B cell (primary cell): ENCODE measurements at regions of chr11 and their contacts with region 1.

Region 1: GRCh38 chr11:35822815-35823495 is 120.9 kb upstream of the LDLRAD3 start:
- DNase-seq: no peak
- ATAC-seq: no peak
- H3K4me3 ChIP-seq: no peak overlapping the region
- H3K4me3 Mint-ChIP-seq: no peak overlapping the region
- H3K27ac ChIP-seq: no peak overlapping the region
- H3K27ac Mint-ChIP-seq: no peak overlapping the region
- H3K4me1 ChIP-seq: peaks cover 3 to 9% of the 10 kb centered on the region in 2 donors
- H3K4me1 Mint-ChIP-seq: peaks cover 12% of the 10 kb centered on the region
- H3K27me3 ChIP-seq: no peaks in the 10 kb centered on the region
- H3K27me3 Mint-ChIP-seq: peaks cover 4% of the 10 kb centered on the region
- CTCF ChIP-seq: no peak

Region 2: DNA sequence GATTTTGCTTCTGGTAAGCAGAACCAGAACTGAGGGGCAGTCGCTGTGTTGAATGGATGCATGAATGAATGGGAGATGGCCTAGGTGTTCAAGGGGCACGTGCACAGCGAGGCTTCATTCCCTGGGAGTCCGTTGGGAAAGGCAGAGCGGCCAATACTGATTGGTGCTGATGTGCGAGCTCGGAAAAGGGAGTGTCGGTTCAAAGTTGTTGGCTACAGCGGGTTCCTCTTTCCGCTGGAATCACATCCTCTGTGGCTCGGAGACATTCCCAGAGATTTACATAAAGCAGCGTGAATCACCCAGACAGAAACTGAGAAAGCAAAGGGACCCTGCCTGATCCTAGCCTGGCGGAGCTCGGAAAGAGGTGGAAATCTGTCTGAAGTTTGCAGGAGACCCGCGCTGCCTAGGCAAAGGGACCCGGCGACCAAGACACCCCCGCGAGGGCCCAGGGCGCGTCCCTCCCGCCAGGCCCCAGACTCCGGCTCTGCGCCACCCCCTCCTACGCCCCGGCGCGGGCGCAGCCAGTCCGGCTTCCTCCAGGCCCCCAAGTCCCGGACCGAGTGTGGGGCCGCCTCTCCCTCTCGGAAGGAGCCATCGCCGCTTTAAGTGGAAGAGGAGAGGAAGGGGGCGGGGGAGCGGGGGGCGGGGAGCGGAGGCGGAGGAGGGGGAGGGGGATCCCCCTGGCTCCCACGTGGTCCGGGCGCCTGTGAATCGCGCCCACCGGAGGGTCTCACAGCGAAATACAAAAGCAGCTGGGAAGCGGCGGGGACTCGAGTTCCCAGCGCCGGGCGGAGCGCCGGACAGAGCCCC is 205.1 kb before region 1 on chr11 and contains the start of gene FJX1:
- CTCF ChIA-PET with region 1: interaction called, 8 read pairs
- POLR2A ChIA-PET with region 1: no interaction called
- intact Hi-C with region 1: loop called (anchors 1 kb)
- DNase-seq: peak; percentile 29
- ATAC-seq: peak; percentile 38
- H3K4me3 ChIP-seq: peak within 1 kb of the TSS; percentile 7 to 55 (median 42)
- H3K4me3 Mint-ChIP-seq: peak within 1 kb of the TSS; percentile 83
- H3K27ac ChIP-seq: no peak within 1 kb of the TSS
- H3K27ac Mint-ChIP-seq: no peak within 1 kb of the TSS
- H3K4me1 ChIP-seq: peaks cover 17 to 21% of the 10 kb centered on the region in 2 donors
- H3K4me1 Mint-ChIP-seq: peaks cover 16% of the 10 kb centered on the region
- H3K27me3 ChIP-seq: peaks cover 0 to 52% (median 32%) of the 10 kb centered on the region in 4 experiments
- H3K27me3 Mint-ChIP-seq: peaks cover 44% of the 10 kb centered on the region
- CTCF ChIP-seq: no peak
- total RNA-seq, gene FJX1: 0.36 TPM in 1 of 2 replicates, not detected in the other

Region 3: DNA sequence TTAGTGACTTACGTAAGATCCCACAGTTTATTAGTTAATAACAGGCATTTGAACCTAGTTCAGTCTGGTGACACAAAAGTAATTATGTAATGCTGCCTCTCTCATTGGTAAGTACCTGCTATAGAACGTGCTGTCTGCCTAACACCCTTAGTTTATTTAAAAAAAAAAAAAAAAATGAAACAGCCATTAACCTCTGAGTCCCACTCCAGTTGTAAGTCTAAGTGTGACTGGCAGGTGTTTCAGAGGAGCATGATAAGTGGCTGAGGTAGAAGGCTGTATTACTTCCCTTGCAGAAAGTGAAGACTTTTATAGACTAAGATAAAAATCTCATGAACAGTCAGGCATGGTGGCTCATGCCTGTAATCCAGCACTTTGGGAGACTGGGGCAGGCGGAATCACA is 19.8 kb before region 1 on chr11:
- CTCF ChIA-PET with region 1: interaction called, 12 read pairs
- POLR2A ChIA-PET with region 1: interaction called, 3 read pairs
- intact Hi-C with region 1: no loop called
- DNase-seq: no peak
- ATAC-seq: no peak
- H3K4me3 ChIP-seq: no peak overlapping the region
- H3K4me3 Mint-ChIP-seq: no peak overlapping the region
- H3K27ac ChIP-seq: no peak overlapping the region
- H3K27ac Mint-ChIP-seq: no peak overlapping the region
- H3K4me1 ChIP-seq: peaks cover 9 to 10% of the 10 kb centered on the region in 2 donors
- H3K4me1 Mint-ChIP-seq: peaks cover 19% of the 10 kb centered on the region
- H3K27me3 ChIP-seq: no peaks in the 10 kb centered on the region
- H3K27me3 Mint-ChIP-seq: no peaks in the 10 kb centered on the region
- CTCF ChIP-seq: no peak

Region 4: DNA sequence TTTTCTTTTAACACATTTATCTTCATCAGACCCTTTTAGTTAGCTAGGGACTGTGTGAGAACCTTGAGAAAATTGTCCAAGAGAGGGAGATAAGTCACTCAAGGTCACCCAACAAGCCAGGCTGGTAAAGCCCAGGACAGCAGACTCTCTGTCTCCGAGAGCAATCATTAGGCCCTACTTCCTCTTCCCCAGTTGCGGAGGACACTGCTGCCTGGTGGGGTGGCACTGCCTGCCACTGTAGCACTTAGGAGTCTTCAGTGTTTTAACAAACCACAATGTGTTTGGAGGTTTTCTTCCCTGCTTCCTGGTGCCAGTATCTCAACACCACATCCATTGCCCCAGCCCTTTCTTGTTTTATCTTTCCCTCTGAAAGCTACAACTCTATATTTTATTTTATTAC is 11.2 kb before region 1 on chr11:
- CTCF ChIA-PET with region 1: interaction called, 25 read pairs
- POLR2A ChIA-PET with region 1: no interaction called
- intact Hi-C with region 1: no loop called
- DNase-seq: no peak
- ATAC-seq: no peak
- H3K4me3 ChIP-seq: no peak overlapping the region
- H3K4me3 Mint-ChIP-seq: no peak overlapping the region
- H3K27ac ChIP-seq: no peak overlapping the region
- H3K27ac Mint-ChIP-seq: no peak overlapping the region
- H3K4me1 ChIP-seq: no peaks in the 10 kb centered on the region
- H3K4me1 Mint-ChIP-seq: no peaks in the 10 kb centered on the region
- H3K27me3 ChIP-seq: no peaks in the 10 kb centered on the region
- H3K27me3 Mint-ChIP-seq: no peaks in the 10 kb centered on the region
- CTCF ChIP-seq: no peak

Region 5: DNA sequence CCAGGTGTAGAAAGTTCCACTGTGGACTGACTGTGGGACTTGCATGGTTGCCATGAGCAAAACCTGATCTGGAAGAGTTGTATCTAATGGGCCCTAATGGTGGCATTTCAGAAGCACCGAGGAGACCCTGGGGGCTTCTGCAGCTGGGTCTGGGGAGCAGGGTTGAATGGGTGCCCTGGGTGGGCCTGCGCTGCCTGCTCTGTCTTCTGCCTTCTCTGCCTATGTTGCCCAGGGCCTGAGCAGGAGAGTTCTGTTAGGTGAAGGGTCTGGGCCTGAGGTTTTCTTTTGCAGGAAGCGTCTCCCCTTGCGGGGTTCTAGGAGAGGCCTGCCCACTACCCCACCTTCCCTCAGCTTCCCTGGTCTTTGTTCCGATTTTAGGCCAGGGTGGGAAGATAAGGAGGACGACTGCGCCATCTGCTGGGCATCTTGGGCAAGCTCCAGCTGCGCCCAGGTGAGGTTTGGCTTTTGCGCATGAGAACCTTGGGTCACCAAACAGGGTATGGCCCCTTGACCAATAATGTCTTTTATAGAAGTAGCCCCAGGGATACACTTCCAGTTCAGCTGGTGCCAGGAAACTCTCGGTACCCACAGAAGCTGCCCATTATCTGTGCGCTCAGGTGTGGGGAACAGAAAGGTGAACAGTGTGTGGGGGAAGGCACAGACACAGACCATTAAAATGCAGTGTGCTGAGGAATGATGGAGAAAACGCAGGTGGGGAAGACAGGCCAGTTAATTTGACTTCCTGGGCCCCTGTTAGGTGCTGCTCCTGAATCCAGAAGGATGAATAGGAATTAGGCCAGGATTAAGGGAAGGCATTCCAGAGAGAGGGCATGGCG is 443.1 kb after region 1 on chr11:
- CTCF ChIA-PET with region 1: interaction called, 8 read pairs
- POLR2A ChIA-PET with region 1: no interaction called
- intact Hi-C with region 1: loop called (anchors 5 kb)
- DNase-seq: peak; percentile 67
- ATAC-seq: peak; percentile 51
- H3K4me3 ChIP-seq: no peak overlapping the region
- H3K4me3 Mint-ChIP-seq: no peak overlapping the region
- H3K27ac ChIP-seq: no peak overlapping the region
- H3K27ac Mint-ChIP-seq: no peak overlapping the region
- H3K4me1 ChIP-seq: no peaks in the 10 kb centered on the region
- H3K4me1 Mint-ChIP-seq: no peaks in the 10 kb centered on the region
- H3K27me3 ChIP-seq: peaks cover 0 to 4% (median 0%) of the 10 kb centered on the region in 4 experiments
- H3K27me3 Mint-ChIP-seq: peaks cover 11% of the 10 kb centered on the region
- CTCF ChIP-seq: peak; percentile 80